ENCODE measurements at regions of chr2 and their contacts with region 1.

Region 1: DNA sequence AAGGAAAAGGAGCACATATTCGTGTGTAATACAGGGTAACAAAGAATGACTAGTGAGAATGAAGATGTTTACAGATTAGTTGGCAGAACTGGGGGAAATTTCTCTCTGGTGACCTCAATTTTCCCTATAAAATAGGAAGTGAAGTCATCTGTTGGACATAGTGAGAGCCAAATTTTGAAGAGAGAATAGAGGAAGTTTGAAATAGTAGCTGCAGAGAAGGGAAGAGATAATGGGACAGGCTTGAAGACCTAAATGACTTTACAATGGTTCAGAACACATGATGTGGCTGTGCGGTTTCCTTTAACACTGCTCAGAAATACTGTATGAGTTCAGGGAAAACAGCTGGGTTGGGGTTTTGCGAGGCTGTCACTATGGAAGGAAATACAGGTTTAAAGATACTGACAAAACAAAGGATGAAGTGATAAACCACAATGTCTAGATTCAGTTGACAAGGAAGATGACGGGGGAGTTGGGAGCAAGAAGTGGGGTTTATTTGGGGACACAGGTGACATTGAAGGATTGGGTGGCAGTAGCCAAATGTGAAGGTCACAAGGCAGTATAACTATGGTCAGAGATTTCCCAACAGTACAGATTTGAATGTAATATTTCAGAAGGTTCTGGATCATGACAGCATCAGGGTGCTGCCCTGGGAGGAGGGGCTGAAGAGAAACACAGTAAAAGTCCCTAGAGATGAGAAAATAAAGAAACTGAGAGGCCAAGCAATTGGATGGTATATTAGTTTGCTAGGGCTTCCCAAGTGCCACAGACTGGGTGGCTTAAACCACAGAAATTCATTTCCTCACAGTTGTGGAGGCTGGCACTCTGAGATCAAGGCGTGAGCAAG is 82.6 kb upstream of the TANK start:
- DNase-seq: peak; percentile 91
- H3K4me3 Mint-ChIP-seq: peak overlapping the region; percentile 34
- H3K27ac Mint-ChIP-seq: peak overlapping the region; percentile 92
- H3K4me1 Mint-ChIP-seq: peaks cover 41% of the 10 kb centered on the region
- H3K27me3 Mint-ChIP-seq: no peaks in the 10 kb centered on the region

Region 2: GRCh38 chr2:159895258-159896065 is 1182.1 kb before region 1 on chr2:
- CTCF ChIA-PET with region 1: no interaction called
- intact Hi-C with region 1: loop called (anchors 1 kb)
- DNase-seq: peak; percentile 66
- H3K4me3 Mint-ChIP-seq: no peak overlapping the region
- H3K27ac Mint-ChIP-seq: peak overlapping the region; percentile 84
- H3K4me1 Mint-ChIP-seq: peaks cover 91% of the 10 kb centered on the region
- H3K27me3 Mint-ChIP-seq: no peaks in the 10 kb centered on the region

Region 3: GRCh38 chr2:160324161-160324800 is 753.3 kb before region 1 on chr2:
- CTCF ChIA-PET with region 1: no interaction called
- intact Hi-C with region 1: loop called (anchors 1 kb)
- DNase-seq: peak; percentile 69
- H3K4me3 Mint-ChIP-seq: no peak overlapping the region
- H3K27ac Mint-ChIP-seq: no peak overlapping the region
- H3K4me1 Mint-ChIP-seq: peaks cover 78% of the 10 kb centered on the region
- H3K27me3 Mint-ChIP-seq: no peaks in the 10 kb centered on the region

Region 4: GRCh38 chr2:161004379-161004778 is 73.2 kb before region 1 on chr2:
- CTCF ChIA-PET with region 1: no interaction called
- intact Hi-C with region 1: no loop called
- DNase-seq: no peak
- H3K4me3 Mint-ChIP-seq: no peak overlapping the region
- H3K27ac Mint-ChIP-seq: no peak overlapping the region
- H3K4me1 Mint-ChIP-seq: no peaks in the 10 kb centered on the region
- H3K27me3 Mint-ChIP-seq: peaks cover 13% of the 10 kb centered on the region

Region 5: DNA sequence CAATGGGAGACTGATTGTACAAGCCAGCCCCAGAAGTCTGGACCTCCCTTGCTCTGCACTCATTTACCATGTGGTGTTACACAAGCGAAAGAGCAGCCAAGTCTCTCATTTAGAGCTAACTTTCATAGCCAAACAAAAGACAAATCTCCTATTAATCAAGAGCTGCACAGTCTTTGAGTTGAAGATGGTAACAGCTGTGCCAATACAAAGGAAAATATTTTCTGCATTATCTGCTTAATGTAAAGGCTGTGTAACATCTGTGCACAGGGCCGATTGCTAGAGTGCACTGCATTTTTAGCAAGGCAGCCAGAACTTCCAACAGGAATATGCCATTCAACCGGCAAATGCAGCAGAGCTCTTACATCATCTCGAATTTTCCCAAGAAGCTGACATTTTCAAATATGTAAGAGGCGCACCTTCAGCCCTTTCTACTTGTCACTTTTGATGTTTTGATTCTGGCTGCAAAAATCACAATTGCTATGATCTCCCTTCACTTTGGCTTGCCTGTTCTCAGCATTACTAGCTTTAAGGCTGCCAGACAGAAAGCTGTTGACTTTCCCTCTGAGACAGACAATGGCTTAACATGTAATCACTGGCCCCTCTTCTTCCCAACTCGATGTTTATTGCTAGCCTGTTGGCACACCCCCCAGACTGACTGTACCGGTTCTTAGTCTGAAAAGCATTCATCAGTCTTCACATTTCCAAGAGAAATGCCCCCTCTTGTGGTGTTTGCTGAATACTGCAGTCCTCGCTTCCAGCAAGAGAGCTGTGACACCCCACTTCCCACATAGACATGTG is 14.2 kb before region 1 on chr2:
- CTCF ChIA-PET with region 1: interaction called, 39 read pairs
- intact Hi-C with region 1: no loop called
- DNase-seq: peak; percentile 81
- H3K4me3 Mint-ChIP-seq: no peak overlapping the region
- H3K27ac Mint-ChIP-seq: no peak overlapping the region
- H3K4me1 Mint-ChIP-seq: peaks cover 9% of the 10 kb centered on the region
- H3K27me3 Mint-ChIP-seq: peaks cover 5% of the 10 kb centered on the region

Region 6: GRCh38 chr2:161136696-161137324 is 59.2 kb after region 1 on chr2:
- CTCF ChIA-PET with region 1: no interaction called
- intact Hi-C with region 1: loop called (anchors 1 kb)
- DNase-seq: peak; percentile 48
- H3K4me3 Mint-ChIP-seq: peak overlapping the region; percentile 88
- H3K27ac Mint-ChIP-seq: peak overlapping the region; percentile 98
- H3K4me1 Mint-ChIP-seq: peaks cover 49% of the 10 kb centered on the region
- H3K27me3 Mint-ChIP-seq: no peaks in the 10 kb centered on the region

Region 7: DNA sequence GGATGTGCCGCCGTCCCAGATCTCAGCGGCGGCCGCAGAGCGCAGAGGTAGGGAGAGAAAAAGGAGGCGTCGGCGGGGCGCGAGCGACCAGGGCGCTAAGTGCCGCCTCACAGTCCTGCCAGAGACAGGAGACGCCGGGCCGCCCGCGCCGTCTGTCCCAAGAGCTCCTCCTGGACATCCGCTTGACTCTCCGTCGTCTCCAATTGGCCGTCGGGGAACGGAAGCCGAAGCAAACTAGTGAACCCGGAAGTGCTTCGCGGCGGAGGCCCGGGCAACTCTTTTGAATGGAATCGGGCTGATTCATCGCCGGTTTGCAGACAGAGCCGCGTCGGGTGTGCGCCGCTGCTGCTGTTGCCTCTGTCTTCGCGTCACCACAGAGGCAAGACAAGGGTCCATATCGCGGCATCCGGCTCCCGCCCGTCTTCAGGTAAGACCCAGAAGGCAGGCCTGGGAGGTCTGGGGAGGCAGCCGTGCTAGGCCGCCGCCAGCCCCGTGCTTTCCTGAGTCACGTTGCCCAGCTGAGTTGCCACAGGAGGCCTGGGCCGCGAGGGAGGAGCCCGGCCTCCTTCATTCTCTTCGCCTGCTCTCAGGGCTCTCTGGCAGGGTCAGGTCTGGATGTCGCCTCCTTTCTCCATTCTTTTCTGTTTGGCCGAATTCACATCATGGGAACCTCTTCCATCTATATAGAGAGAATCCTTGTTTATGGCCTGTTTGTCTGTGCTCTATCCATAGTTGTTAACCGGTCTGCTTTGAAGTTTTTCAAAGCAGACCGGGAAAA is 230.8 kb after region 1 on chr2 and contains the start of gene PSMD14:
- CTCF ChIA-PET with region 1: no interaction called
- intact Hi-C with region 1: loop called (anchors 1 kb)
- DNase-seq: peak; percentile 96
- H3K4me3 Mint-ChIP-seq: peak within 1 kb of the TSS; percentile 86
- H3K27ac Mint-ChIP-seq: peak within 1 kb of the TSS; percentile 91
- H3K4me1 Mint-ChIP-seq: peaks cover 35% of the 10 kb centered on the region
- H3K27me3 Mint-ChIP-seq: no peaks in the 10 kb centered on the region
- total RNA-seq, gene PSMD14: 76.2 to 79.4 TPM

Region 8: GRCh38 chr2:162058973-162059668 is 981.5 kb after region 1 on chr2:
- CTCF ChIA-PET with region 1: no interaction called
- intact Hi-C with region 1: loop called (anchors 1 kb)
- DNase-seq: peak; percentile 57
- H3K4me3 Mint-ChIP-seq: peak overlapping the region; percentile 44
- H3K27ac Mint-ChIP-seq: peak overlapping the region; percentile 89
- H3K4me1 Mint-ChIP-seq: peaks cover 88% of the 10 kb centered on the region
- H3K27me3 Mint-ChIP-seq: no peaks in the 10 kb centered on the region